ENCODE measurements at regions of chr16 and their contacts with region 1.

Region 1: DNA sequence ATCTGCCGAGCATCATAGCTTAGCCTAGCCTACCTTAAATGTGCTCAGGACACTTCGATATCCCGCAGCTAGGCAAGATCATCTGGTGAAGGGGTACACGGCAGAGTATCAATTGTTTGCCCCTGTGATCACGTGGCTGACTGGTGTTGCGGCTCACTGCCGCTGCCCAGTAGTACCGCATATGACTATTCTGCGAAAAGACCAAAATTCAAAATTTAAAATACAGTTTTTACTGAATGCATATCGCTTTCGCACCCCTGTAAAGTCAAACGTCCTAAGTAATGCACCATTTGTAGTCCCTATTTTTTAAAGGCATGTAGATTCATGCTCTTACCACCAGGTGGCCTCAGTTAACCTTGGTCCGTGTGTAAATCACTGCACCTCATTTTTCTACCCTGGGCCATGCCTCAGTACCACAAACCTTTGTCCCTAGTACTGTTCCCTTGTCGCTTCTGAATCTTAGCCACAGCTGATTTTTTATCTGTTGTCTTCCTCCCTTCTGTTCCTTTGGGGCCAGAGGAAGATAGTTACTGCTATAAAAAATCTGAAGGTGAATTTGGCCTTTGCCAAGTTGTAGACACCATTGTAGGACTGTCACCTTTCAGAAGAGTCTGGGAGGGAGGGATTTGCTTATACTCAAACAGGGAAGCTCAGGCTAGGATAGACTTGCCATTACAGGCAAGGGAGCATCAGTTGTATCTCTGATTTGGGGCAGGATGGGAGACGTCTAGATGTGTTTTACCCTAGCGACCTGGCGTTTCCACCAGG is 34.4 kb downstream of the WWP2 start:
- DNase-seq: no peak
- ATAC-seq: peak; percentile 61

Region 2: DNA sequence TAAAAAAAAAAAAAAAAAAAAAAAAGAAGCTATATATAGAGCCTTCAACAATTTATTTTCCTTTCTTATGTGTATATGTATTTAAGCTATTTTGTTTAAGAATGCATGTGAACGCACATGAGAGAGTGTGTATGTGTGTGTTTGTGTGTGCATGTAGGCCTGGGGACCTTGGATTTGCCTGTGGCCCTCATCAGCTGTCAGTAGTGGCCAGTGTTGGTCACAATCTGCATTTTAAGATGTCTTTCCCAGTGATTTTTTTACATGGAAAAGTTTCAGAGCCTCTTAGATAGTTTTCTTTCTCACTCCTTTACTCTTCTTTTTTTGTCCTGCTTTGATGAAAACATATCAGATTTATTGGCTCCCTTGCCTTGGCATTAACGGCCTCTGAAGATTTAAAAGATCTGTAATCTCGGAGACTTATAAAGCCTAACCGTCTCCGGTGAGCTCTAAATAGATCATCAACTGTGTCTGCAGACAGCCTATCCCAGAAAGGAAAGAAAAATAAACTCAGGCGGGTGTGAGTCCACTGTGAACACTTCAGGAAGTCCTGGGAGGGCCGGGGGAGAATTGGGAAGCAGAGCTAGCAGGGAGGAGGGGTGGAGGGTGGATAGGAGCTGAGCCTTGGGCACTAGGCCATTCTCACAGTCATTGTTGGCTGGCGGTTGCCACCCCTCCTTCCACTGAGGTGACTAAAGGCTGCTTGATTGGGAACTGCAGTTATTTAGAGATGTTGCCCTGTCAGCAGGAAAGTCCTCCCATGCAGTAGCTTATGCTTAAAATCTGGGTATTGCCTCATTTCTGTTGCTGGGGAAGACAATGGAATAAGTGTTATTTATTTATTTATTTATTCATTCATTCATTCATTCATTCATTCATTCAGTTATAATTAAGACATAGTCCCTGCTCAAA is 52.4 kb after region 1 on chr16:
- intact Hi-C with region 1: no loop called
- DNase-seq: peak; percentile 88
- ATAC-seq: peak; percentile 99

Region 3: DNA sequence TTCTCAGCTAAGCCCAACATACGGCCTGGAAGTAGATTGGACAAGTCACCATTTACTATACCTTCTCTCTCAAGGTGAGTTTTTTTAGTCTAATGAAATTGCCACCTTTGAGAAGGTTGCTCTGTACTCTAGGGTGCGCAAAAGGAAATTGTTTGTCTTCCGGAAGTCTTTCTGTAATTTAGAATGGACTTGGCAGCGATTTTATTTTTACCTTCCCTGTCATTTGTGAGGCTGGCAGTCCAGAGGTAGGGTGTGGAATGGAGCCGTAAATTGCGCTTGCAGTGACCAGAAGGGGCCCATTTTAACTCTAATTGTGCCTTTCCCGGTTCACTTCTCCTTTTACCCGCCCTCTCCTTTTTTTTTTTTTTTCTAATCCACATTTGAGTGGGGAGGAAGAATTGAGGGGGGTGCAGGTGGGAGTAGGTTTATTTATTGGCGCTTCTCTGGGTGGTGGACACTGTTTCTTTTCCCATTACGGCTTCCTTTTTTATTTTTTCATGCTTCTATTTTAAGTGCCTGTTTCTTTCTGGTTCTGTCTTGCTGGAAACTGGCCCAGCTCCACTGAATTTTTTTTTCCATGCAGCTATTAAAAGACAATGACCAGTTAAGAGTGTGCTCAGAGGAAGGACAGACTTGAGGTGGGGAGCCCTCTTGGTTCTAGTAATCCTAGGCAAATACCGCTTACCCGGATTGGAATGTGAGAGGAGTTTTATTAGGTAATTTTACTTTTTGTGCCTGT is 64.9 kb after region 1 on chr16:
- intact Hi-C with region 1: loop called (anchors 2 kb)
- DNase-seq: no peak
- ATAC-seq: peak; percentile 76

Region 4: DNA sequence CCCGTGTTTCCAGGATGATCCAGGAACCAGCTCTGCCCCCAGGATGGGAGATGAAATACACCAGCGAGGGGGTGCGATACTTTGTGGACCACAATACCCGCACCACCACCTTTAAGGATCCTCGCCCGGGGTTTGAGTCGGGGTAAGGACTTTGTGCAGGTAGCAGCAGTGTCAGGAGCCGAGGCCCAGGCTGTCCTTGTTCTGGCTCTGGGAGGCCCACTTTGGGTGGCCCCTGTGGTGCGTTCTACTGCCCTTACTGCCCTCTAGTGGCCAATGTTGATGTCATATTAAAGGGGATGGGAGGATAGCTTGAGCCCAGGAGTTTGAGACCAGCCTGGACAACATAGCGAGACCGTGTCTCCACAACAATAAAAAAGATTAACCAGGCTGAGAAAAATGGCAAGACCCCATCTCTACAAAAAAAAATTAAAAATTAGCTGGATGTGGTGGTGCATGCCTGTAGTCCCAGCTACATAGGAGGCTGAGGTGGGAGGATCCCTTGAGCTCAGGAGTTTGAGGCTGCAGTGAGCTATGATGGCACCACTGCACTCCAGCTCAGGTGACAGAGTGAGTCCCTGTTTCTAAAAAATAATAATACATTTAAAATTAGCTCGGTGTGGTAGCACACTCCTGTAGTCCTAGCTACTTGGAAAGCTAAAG is 133.7 kb after region 1 on chr16:
- intact Hi-C with region 1: loop called (anchors 1 kb)
- DNase-seq: no peak
- ATAC-seq: peak; percentile 73

Measured in Right ventricle myocardium inferior (tissue), 1 donor.